Transverse colon (tissue), 4 donors: ENCODE measurements at regions of chr12 and their contacts with region 1.

Region 1: DNA sequence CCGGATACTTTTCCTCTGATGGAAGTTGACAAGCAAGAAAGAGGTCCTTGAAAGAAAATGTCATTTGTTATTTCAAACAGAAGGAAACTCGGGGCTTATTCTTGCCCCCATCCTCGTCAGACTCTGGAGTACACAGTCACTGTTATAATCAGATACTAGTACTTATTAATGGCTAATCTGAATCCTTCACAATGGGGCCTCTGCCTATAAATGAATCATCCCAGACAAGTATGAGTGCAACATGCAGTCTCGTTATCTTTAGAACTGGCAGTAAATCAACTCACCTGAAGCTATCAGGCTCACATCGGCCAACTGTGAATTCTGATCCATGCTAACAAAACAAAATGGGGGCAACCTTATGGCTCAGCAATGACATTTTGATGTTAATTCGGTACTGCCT is 216.7 kb downstream of the GRIN2B start:
- DNase-seq: no peak
- H3K4me3 ChIP-seq: no peak overlapping the region
- H3K27ac ChIP-seq: no peak overlapping the region
- H3K4me1 ChIP-seq: no peaks in the 10 kb centered on the region
- H3K27me3 ChIP-seq: no peaks in the 10 kb centered on the region
- CTCF ChIP-seq: no peak
- EP300 ChIP-seq: no peak
- POLR2A ChIP-seq: no peak

Region 2: DNA sequence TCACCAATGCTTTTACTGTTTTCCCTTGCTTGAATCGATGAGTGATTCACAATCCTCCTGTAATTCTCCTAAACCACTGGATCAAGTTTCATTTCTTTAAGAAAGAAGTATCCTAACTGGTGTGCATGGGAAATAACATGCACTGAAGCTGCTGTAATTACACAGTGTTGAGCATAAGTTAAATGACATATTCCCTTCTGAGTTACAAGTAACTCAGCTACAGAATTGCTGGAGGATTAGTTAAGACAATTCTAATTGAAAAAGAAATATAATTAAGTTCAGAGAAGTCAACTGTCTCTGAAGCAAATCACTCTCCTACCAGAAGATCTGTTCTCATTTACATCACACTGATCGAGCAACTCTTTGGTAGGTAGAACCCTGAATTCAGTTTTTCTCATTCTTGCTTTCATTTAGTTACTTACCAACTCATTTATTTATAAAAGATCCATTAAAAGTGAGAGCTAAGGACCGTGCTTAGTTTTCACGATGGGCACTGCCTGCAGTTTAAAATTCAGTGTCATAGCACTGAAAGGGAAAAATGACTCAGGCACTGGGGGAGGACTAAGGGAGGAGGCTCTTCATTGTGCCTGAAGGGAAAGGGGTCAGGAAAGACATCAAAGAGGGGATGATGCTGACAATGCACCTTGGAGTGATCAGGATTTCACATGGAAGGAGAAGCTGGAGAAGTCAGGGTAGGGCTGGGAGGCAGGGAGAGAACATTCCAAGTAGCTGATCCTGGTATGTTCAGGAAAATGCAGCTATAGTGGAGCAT is 241.0 kb before region 1 on chr12:
- in situ Hi-C with region 1: no loop called
- intact Hi-C with region 1: loop called (anchors 5 kb)
- DNase-seq: no peak
- H3K4me3 ChIP-seq: no peak overlapping the region
- H3K27ac ChIP-seq: no peak overlapping the region
- H3K4me1 ChIP-seq: no peaks in the 10 kb centered on the region
- H3K27me3 ChIP-seq: no peaks in the 10 kb centered on the region
- CTCF ChIP-seq: no peak
- EP300 ChIP-seq: no peak
- POLR2A ChIP-seq: no peak